ENCODE measurements at regions of chr18 and their contacts with region 1.

Region 1: GRCh38 chr18:80147418-80148325 is 38.6 kb downstream of the ADNP2 start:
- DNase-seq: peak; percentile 88 to 89
- H3K4me3 ChIP-seq: peak overlapping the region; percentile 52 to 56
- H3K27ac ChIP-seq: no peak overlapping the region
- H3K4me1 ChIP-seq: peaks cover 0 to 20% (median 3%) of the 10 kb centered on the region in 4 donors
- H3K27me3 ChIP-seq: no peaks in the 10 kb centered on the region
- CTCF ChIP-seq: no peak

Region 2: DNA sequence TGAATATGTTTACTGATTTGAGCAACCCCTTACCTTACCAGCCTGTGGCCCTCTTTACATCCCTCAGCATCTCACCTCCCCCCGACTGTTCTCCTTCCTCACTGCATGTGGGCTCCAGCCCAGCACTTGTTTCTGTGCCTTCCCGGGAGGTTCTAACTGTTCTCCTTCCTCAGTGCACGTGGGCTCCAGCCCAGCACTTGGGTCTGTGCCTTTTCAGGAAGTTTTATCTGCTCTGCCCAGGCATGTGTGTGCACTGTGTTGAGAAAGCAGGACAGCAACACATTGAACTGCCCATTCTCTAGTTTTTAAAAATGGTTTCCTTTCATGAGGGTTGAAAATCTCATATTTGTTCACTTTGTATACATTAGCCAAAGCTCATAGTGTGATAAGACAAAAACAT is 920.1 kb before region 1 on chr18:
- intact Hi-C with region 1: loop called (anchors 10 kb)
- DNase-seq: no peak
- H3K4me3 ChIP-seq: no peak overlapping the region
- H3K27ac ChIP-seq: no peak overlapping the region
- H3K4me1 ChIP-seq: no peaks in the 10 kb centered on the region
- H3K27me3 ChIP-seq: no peaks in the 10 kb centered on the region
- CTCF ChIP-seq: no peak

Measured in tibial artery (tissue), 4 donors.